Adrenal gland (tissue), 19 donors: ENCODE measurements at regions of chr1 and their contacts with region 1.

Region 1: GRCh38 chr1:46247436-46248121 is at the start of gene RAD54L:
- DNase-seq: peak; percentile 97 to 99 (median 99)
- H3K4me3 ChIP-seq: peak within 1 kb of the TSS in 3 of 4 donors; percentile 31 to 78 (median 76)
- H3K27ac ChIP-seq: peak within 1 kb of the TSS in 2 of 5 donors; percentile 38 to 72
- H3K4me1 ChIP-seq: peaks cover 7 to 12% of the 10 kb centered on the region in 2 donors
- H3K27me3 ChIP-seq: no peaks in the 10 kb centered on the region
- CTCF ChIP-seq: no peak
- POLR2A ChIP-seq: no peak
- total RNA-seq, gene RAD54L: 0.49 to 3.5 (median 1.1) TPM in 7 of 9 donors, not detected in the others

Region 2: DNA sequence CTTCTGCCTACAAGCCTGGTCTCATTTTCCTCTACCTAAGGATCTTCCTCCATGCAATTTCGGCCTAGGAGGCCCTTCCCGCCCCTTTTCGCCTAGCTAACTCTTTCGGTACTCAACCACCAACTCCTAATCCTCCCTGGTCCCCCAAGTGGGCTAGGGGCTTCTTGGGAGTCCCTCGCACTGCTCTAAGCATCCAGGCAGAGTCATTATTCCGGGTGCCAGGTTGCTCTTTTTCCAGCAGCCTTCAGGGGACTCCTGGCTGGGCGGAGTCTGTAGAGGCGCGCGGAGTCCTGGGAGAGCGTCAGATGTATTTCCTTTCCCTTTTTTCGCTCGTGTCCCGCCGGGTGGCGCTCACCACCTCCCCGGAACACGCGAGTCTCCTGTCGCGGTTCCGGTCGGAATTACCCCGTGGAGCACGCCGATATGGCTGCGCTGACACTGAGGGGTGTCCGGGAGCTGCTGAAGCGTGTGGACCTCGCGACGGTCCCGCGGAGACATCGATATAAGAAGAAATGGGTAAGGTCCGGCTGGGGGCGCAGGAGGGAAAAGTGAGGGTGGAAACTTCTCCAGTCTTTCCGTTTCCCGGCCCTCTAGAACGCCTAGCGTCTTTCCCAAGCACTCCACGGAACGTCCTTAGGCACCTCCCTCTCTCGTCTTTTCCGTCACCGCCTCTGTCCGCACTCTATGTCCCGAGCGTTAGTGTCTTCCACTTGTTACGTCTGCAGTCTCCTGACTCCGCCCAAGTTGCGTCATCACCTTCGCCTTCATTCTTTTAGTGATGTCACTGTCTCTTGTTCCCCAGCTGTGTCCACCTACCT is 93.0 kb after region 1 on chr1 and contains the start of gene NSUN4:
- intact Hi-C with region 1: loop called in 1 of 2 experiments (anchors 10 kb)
- DNase-seq: peak; percentile 91 to 99 (median 97)
- H3K4me3 ChIP-seq: peak within 1 kb of the TSS; percentile 70 to 92 (median 76)
- H3K27ac ChIP-seq: peak within 1 kb of the TSS; percentile 95 to 100 (median 98)
- H3K4me1 ChIP-seq: peaks cover 13 to 25% of the 10 kb centered on the region in 2 donors
- H3K27me3 ChIP-seq: no peaks in the 10 kb centered on the region
- CTCF ChIP-seq: peak; percentile 44 to 72 (median 59)
- POLR2A ChIP-seq: peak; percentile 82 to 94
- total RNA-seq, gene NSUN4: 26.0 to 46.1 (median 40.3) TPM